ENCODE measurements at regions of chr12 and their contacts with region 1.

Region 1: DNA sequence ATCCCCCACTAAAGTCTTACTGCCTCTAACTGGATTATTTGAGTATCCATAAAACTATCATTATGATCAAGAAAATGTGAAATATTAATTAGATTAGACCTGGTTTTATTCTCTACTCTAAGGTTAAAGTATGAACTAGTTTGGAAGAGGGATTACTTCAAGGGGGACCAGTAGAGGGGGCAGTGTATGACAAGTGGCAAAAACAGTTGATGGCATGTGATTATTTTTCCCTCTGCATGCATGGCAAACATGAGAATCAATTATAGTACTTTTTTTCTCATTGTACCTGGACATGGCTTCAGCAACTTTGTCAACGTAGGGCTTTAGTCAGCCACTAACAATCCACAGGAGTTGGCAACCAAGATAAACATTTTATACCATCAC is 145.0 kb upstream of the SLC38A2 start:
- DNase-seq: no peak
- ATAC-seq: no peak
- H3K4me3 ChIP-seq: no peak overlapping the region
- H3K4me3 Mint-ChIP-seq: peak overlapping the region in 9 of 10 donors; percentile 35 to 82 (median 65)
- H3K27ac ChIP-seq: no peak overlapping the region
- H3K27ac Mint-ChIP-seq: peak overlapping the region; percentile 2 to 93 (median 80)
- H3K4me1 ChIP-seq: peaks cover 0 to 27% of the 10 kb centered on the region in 2 donors
- H3K4me1 Mint-ChIP-seq: peaks cover 28 to 77% (median 62%) of the 10 kb centered on the region in 7 donors
- H3K27me3 ChIP-seq: no peaks in the 10 kb centered on the region
- H3K27me3 Mint-ChIP-seq: no peaks in the 10 kb centered on the region

Region 2: DNA sequence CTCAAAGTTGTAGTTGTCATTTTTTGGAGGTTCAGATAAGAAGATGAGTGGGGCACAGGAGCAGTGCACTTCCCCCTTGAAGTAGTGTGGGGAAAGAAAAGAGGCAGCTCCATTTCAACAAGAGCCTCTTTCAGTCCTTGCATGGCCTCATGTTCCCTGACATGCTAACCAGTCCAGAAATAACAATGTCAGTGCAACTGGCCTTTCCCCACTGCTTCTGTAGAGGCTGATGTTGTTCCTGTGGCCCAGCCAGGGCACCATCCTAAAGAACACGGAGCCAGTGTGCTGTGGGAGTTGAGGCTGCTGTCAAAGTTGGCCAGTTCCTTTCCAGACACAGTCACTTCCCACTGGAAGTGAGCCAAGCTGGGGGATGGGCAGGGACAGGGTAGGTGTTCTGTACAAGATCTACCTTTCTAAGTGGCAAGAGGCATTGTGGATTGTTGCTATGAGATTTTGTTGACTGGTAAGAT is 67.3 kb before region 1 on chr12:
- CTCF ChIA-PET with region 1: no interaction called
- POLR2A ChIA-PET with region 1: no interaction called
- intact Hi-C with region 1: no loop called
- DNase-seq: no peak
- ATAC-seq: no peak
- H3K4me3 ChIP-seq: no peak overlapping the region
- H3K4me3 Mint-ChIP-seq: peak overlapping the region in 5 of 10 donors; percentile 1 to 75 (median 49)
- H3K27ac ChIP-seq: no peak overlapping the region
- H3K27ac Mint-ChIP-seq: peak overlapping the region in 6 of 9 donors; percentile 24 to 90 (median 75)
- H3K4me1 ChIP-seq: peaks cover 0 to 25% of the 10 kb centered on the region in 2 donors
- H3K4me1 Mint-ChIP-seq: peaks cover 35 to 62% (median 54%) of the 10 kb centered on the region in 7 donors
- H3K27me3 ChIP-seq: no peaks in the 10 kb centered on the region
- H3K27me3 Mint-ChIP-seq: peaks cover 0 to 3% (median 0%) of the 10 kb centered on the region in 5 donors

Region 3: DNA sequence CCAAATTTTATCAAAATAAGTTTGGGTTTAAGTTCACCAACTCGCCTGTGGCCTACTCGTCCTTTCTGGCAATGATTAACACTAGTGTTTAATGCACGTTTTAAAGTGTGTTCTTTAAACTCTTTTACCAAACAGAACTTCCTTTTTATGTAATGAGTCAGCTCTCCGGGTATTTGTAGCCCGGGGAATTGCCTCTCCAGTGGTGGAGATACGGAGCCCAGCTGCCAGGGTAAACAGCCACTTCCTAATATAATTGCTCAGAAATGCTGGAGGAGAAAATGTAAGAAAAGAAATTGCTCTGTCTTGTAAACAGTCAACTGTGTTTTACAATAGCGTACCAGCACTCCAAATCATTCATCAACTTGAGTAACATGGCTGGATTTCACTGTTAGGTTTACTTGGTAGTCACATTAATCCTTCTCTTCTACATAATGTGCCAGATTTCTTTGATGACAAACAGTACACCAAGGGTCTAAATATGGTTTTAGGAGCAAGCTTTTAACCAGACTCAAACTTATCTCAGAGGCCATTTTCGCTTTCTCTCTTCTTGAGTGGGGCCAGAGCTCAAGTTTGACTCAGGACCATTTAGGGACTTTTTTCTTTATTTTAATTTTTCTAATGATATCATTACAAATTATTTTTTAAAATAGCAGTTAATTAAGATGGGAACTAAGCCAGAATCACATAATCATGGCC is 43.8 kb before region 1 on chr12:
- CTCF ChIA-PET with region 1: no interaction called
- POLR2A ChIA-PET with region 1: no interaction called
- intact Hi-C with region 1: loop called (anchors 1 to 2 kb)
- DNase-seq: no peak
- ATAC-seq: peak; percentile 76
- H3K4me3 ChIP-seq: no peak overlapping the region
- H3K4me3 Mint-ChIP-seq: peak overlapping the region in 6 of 10 donors; percentile 4 to 48 (median 25)
- H3K27ac ChIP-seq: peak overlapping the region; percentile 11
- H3K27ac Mint-ChIP-seq: peak overlapping the region in 3 of 9 donors; percentile 66 to 69 (median 68)
- H3K4me1 ChIP-seq: peaks cover 0 to 15% of the 10 kb centered on the region in 2 donors
- H3K4me1 Mint-ChIP-seq: peaks cover 15 to 50% (median 22%) of the 10 kb centered on the region in 7 donors
- H3K27me3 ChIP-seq: no peaks in the 10 kb centered on the region
- H3K27me3 Mint-ChIP-seq: no peaks in the 10 kb centered on the region

Region 4: DNA sequence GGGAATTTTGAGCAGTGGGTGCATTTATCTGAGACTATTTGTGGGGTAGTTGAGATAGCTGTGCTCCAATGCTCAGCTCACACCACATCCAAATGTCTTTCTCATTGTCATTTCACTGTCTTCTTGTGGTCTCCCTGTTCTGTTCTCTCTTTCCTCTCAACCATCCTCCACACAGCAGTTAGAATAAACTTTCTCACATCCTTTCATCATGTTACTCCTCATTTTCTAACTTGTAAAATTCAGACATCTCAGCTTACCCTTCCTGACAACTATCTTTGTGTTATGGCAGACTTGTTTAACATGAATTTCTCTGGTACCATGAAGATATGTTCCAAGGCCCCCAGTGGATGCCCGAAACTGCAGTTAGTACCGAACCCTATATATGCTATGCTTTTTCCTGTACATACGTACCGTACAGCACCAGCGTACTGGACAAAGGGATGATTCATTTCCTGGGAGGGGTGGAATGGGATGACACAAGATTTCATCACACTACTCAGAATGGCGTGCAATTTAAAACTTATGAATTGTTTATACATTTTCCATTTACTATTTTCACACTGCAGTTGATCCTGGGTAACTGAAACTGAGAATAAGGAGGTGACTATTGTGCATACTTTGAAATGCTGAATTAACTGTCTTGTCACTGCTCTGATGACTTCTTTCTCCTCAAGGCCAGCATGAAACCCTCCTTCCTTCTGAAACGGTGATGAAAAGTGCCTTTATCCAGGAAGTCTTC is 32.1 kb after region 1 on chr12:
- CTCF ChIA-PET with region 1: no interaction called
- POLR2A ChIA-PET with region 1: no interaction called
- intact Hi-C with region 1: loop called in 1 of 2 experiments (anchors 1 kb)
- DNase-seq: peak in 1 of 9 donors; percentile 53
- ATAC-seq: peak; percentile 75
- H3K4me3 ChIP-seq: no peak overlapping the region
- H3K4me3 Mint-ChIP-seq: peak overlapping the region; percentile 7 to 81 (median 39)
- H3K27ac ChIP-seq: no peak overlapping the region
- H3K27ac Mint-ChIP-seq: peak overlapping the region in 6 of 9 donors; percentile 1 to 93 (median 14)
- H3K4me1 ChIP-seq: peaks cover 11 to 24% of the 10 kb centered on the region in 2 donors
- H3K4me1 Mint-ChIP-seq: peaks cover 28 to 69% (median 45%) of the 10 kb centered on the region in 7 donors
- H3K27me3 ChIP-seq: no peaks in the 10 kb centered on the region
- H3K27me3 Mint-ChIP-seq: no peaks in the 10 kb centered on the region

Region 5: DNA sequence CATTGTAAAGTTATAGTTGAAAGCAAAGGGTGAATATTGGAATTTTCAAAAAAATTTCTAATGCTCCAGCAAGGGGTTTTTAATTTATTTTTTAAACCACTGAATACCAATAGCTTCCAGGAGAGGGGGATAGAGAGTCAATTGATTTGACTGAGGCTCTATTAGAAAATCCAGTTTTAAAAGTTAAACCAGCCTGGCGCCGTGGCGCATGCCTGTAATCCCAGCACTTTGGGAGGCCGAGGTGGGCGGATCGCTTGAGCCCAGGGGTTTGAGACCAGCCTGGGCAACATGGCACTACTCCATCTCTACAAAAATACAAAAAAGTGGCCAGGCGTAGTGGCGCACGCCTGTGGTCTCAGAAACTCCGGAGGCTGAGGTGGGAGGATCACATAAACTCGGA is 158.2 kb after region 1 on chr12:
- CTCF ChIA-PET with region 1: no interaction called
- POLR2A ChIA-PET with region 1: no interaction called
- intact Hi-C with region 1: no loop called
- DNase-seq: peak in 5 of 9 donors; percentile 24 to 38 (median 34)
- ATAC-seq: no peak
- H3K4me3 ChIP-seq: no peak overlapping the region
- H3K4me3 Mint-ChIP-seq: no peak overlapping the region
- H3K27ac ChIP-seq: no peak overlapping the region
- H3K27ac Mint-ChIP-seq: no peak overlapping the region
- H3K4me1 ChIP-seq: no peaks in the 10 kb centered on the region
- H3K4me1 Mint-ChIP-seq: peaks cover 0 to 16% (median 0%) of the 10 kb centered on the region in 7 donors
- H3K27me3 ChIP-seq: no peaks in the 10 kb centered on the region
- H3K27me3 Mint-ChIP-seq: peaks cover 0 to 3% (median 0%) of the 10 kb centered on the region in 5 donors

Region 6: DNA sequence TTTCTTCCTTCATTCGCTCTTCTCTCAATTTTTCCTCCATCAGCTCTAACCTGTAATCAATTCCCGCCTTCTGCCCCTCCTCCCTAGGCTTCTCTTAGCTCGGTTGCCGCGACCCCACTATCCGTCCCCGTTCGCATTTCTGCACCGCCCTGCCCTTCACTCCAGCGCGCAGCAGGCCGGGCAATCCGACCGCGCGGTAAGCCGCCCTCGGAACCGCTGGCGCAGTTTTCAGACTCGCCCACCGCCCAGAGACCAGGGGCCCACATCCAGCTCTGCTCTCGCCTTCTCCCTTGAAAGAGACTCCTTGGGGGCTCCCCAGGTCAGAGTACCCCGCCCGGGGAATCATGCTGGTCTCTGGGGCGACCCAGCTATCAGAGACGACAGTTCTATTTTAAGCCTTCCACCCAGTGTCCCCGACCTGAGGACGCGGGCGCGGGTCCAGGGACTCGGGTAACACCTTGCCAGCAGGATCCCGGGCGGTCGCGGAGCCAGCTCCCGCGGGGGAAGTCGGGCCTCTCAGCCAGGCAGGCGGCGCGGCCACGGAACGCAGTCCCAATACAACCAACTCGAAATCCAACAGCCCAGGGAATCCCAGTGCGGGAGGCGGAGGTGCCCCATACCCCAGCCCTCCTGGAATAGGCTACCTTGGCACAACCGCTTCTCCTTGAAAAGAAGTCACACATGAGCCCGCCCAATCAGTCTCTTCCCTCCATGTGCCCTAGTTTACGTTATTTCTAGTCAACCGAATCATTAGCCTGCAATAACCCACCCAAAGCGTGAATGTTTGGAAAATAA is 314.0 kb after region 1 on chr12:
- CTCF ChIA-PET with region 1: no interaction called
- POLR2A ChIA-PET with region 1: no interaction called
- intact Hi-C with region 1: no loop called
- DNase-seq: no peak
- ATAC-seq: no peak
- H3K4me3 ChIP-seq: no peak overlapping the region
- H3K4me3 Mint-ChIP-seq: peak overlapping the region in 7 of 10 donors; percentile 10 to 78 (median 63)
- H3K27ac ChIP-seq: no peak overlapping the region
- H3K27ac Mint-ChIP-seq: no peak overlapping the region
- H3K4me1 ChIP-seq: peaks cover 0 to 6% of the 10 kb centered on the region in 2 donors
- H3K4me1 Mint-ChIP-seq: peaks cover 12 to 22% (median 15%) of the 10 kb centered on the region in 7 donors
- H3K27me3 ChIP-seq: peaks cover 0 to 4% of the 10 kb centered on the region in 2 donors
- H3K27me3 Mint-ChIP-seq: peaks cover 68 to 85% (median 76%) of the 10 kb centered on the region in 5 donors